ENCODE measurements at regions of chr5 and their contacts with region 1.

Region 1: GRCh38 chr5:43389679-43390329 is 22.4 kb downstream of the CCL28 start:
- DNase-seq: no peak

Region 2: GRCh38 chr5:43227655-43228054 is 162.1 kb before region 1 on chr5:
- intact Hi-C with region 1: loop called (anchors 10 kb)
- DNase-seq: no peak

Region 3: GRCh38 chr5:43422143-43422542 is 32.3 kb after region 1 on chr5:
- intact Hi-C with region 1: no loop called
- DNase-seq: no peak

Measured in cardiac septum (tissue), 1 donor.